SK-N-SH (cell line): ENCODE measurements at regions of chr19 and their contacts with region 1.

Region 1: GRCh38 chr19:30682999-30683536 is 310.9 kb downstream of the ZNF536 start:
- DNase-seq: peak; percentile 88
- H3K4me3 ChIP-seq: peak overlapping the region in 1 of 2 experiments; percentile 7; a peak in 1 of 4 replicates
- H3K27ac ChIP-seq: peak overlapping the region in 1 of 2 experiments; percentile 65; a peak in 2 of 4 replicates
- H3K4me1 ChIP-seq: peaks cover 0 to 48% of the 10 kb centered on the region in 2 experiments; a peak in 2 of 4 replicates
- H3K27me3 ChIP-seq: no peaks in the 10 kb centered on the region
- CTCF ChIP-seq: peak; percentile 97
- EP300 ChIP-seq: peak in 1 of 2 experiments; percentile 71; a peak in 1 of 4 replicates
- RAD21 ChIP-seq: peak; percentile 99

Region 2: GRCh38 chr19:30556230-30556711 is 126.8 kb before region 1 on chr19:
- CTCF ChIA-PET with region 1: no interaction called
- POLR2A ChIA-PET with region 1: no interaction called
- DNase-seq: no peak
- H3K4me3 ChIP-seq: no peak overlapping the region
- H3K27ac ChIP-seq: no peak overlapping the region; a peak in 1 of 4 replicates
- H3K4me1 ChIP-seq: peaks cover 0 to 23% of the 10 kb centered on the region in 2 experiments; a peak in 1 of 4 replicates
- H3K27me3 ChIP-seq: no peaks in the 10 kb centered on the region
- CTCF ChIP-seq: no peak
- EP300 ChIP-seq: no peak
- RAD21 ChIP-seq: no peak

Region 3: GRCh38 chr19:30590596-30591229 is 92.4 kb before region 1 on chr19:
- CTCF ChIA-PET with region 1: no interaction called
- POLR2A ChIA-PET with region 1: no interaction called
- DNase-seq: no peak
- H3K4me3 ChIP-seq: no peak overlapping the region
- H3K27ac ChIP-seq: no peak overlapping the region
- H3K4me1 ChIP-seq: peaks cover 0 to 2% of the 10 kb centered on the region in 2 experiments; a peak in 1 of 4 replicates
- H3K27me3 ChIP-seq: no peaks in the 10 kb centered on the region
- CTCF ChIP-seq: no peak
- EP300 ChIP-seq: no peak
- RAD21 ChIP-seq: no peak

Region 4: DNA sequence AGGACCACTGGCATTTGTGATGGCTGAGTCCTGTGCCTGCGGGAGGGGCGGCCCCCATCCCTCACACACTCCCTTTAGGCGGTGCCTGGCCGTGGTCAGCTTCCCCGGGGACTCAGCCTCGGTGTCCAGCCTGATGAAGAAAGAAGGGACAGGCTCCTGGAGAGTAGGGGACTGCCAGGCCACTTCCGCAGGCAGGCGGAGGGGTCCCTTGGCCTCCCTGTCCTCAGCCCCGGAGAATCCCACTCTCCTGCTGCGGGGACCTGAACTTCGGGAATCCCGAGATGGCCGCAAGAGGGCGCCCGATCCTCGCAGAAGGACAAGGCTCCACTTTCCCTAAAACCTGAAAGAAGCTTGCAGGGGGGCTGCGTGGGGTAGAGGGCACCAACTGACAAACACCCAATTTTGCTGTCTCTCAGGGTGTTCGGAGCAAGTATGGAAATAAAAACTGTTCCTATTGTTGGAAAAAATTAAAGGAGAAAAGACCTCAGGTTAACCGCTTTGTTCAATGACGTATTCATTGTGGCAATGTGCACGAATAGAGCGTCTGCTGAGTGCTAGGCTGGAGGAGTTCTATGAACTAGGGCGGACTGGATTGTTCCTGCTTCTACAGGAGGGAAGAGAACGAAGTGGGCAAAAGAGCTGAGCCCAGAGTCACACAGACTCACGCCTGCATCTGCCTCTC is 13.6 kb before region 1 on chr19:
- CTCF ChIA-PET with region 1: interaction called, 182 read pairs
- POLR2A ChIA-PET with region 1: no interaction called
- DNase-seq: peak; percentile 83
- H3K4me3 ChIP-seq: no peak overlapping the region; a peak in 2 of 4 replicates
- H3K27ac ChIP-seq: no peak overlapping the region
- H3K4me1 ChIP-seq: peaks cover 0 to 5% of the 10 kb centered on the region in 2 experiments; a peak in 1 of 4 replicates
- H3K27me3 ChIP-seq: no peaks in the 10 kb centered on the region
- CTCF ChIP-seq: peak; percentile 84
- EP300 ChIP-seq: no peak
- RAD21 ChIP-seq: peak; percentile 83

Region 5: GRCh38 chr19:30719189-30719998 is 36.3 kb after region 1 on chr19:
- CTCF ChIA-PET with region 1: interaction called, 32 read pairs
- POLR2A ChIA-PET with region 1: interaction called, 4 read pairs
- DNase-seq: peak; percentile 90
- H3K4me3 ChIP-seq: peak overlapping the region; percentile 38 to 60
- H3K27ac ChIP-seq: peak overlapping the region in 1 of 2 experiments; percentile 93; a peak in 2 of 4 replicates
- H3K4me1 ChIP-seq: peaks cover 0 to 20% of the 10 kb centered on the region in 2 experiments; a peak in 2 of 4 replicates
- H3K27me3 ChIP-seq: no peaks in the 10 kb centered on the region
- CTCF ChIP-seq: no peak
- EP300 ChIP-seq: 0 out of 4 replicates have a peak, but pooled peaks of 1 of the 2 experiments have one; percentile 3
- RAD21 ChIP-seq: peak; percentile 60

Region 6: DNA sequence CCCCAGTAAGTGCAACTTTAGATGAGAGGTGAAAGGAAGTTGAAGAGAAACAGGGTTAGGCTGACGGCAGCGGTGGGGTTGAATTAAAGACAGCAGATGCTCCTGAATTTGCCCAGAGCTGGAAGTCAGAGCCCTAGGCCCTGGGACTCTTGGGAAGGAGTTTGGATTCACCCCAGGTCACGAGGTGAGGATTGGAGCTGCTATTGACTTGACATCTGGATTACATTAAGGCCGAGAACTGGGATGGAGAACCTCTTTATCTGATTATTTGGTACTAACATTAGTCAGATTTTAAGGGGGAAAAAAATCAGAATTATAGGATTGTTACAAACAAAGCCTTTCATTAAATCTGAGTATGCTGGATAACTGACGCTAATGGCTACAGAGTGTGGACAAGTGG is 56.3 kb after region 1 on chr19:
- CTCF ChIA-PET with region 1: interaction called, 38 read pairs
- POLR2A ChIA-PET with region 1: no interaction called
- DNase-seq: peak; percentile 62
- H3K4me3 ChIP-seq: no peak overlapping the region
- H3K27ac ChIP-seq: peak overlapping the region in 1 of 2 experiments; percentile 99; a peak in 2 of 4 replicates
- H3K4me1 ChIP-seq: peaks cover 0 to 68% of the 10 kb centered on the region in 2 experiments; a peak in 2 of 4 replicates
- H3K27me3 ChIP-seq: no peaks in the 10 kb centered on the region
- CTCF ChIP-seq: no peak
- EP300 ChIP-seq: peak in 1 of 2 experiments; percentile 85; a peak in 2 of 4 replicates
- RAD21 ChIP-seq: peak; percentile 18; the same call in 1 of the 2 replicates

Region 7: GRCh38 chr19:30984847-30985246 is 301.8 kb after region 1 on chr19:
- CTCF ChIA-PET with region 1: no interaction called
- POLR2A ChIA-PET with region 1: no interaction called
- DNase-seq: no peak
- H3K4me3 ChIP-seq: no peak overlapping the region
- H3K27ac ChIP-seq: no peak overlapping the region
- H3K4me1 ChIP-seq: no peaks in the 10 kb centered on the region
- H3K27me3 ChIP-seq: no peaks in the 10 kb centered on the region
- CTCF ChIP-seq: no peak
- EP300 ChIP-seq: no peak
- RAD21 ChIP-seq: no peak

Region 8: GRCh38 chr19:31316201-31316951 is 633.3 kb after region 1 on chr19:
- CTCF ChIA-PET with region 1: interaction called, 11 read pairs
- POLR2A ChIA-PET with region 1: no interaction called
- DNase-seq: no peak
- H3K4me3 ChIP-seq: no peak overlapping the region
- H3K27ac ChIP-seq: peak overlapping the region in 1 of 2 experiments; percentile 88; a peak in 2 of 4 replicates
- H3K4me1 ChIP-seq: peaks cover 27 to 58% of the 10 kb centered on the region in 2 experiments; a peak in 3 of 4 replicates
- H3K27me3 ChIP-seq: no peaks in the 10 kb centered on the region
- CTCF ChIP-seq: no peak
- EP300 ChIP-seq: no peak
- RAD21 ChIP-seq: no peak

Region 9: GRCh38 chr19:32041681-32042292 is 1358.7 kb after region 1 on chr19:
- CTCF ChIA-PET with region 1: interaction called, 16 read pairs
- POLR2A ChIA-PET with region 1: no interaction called
- DNase-seq: peak; percentile 72
- H3K4me3 ChIP-seq: peak overlapping the region in 1 of 2 experiments; percentile 52; a peak in 1 of 4 replicates
- H3K27ac ChIP-seq: no peak overlapping the region
- H3K4me1 ChIP-seq: peaks cover 0 to 2% of the 10 kb centered on the region in 2 experiments; a peak in 1 of 4 replicates
- H3K27me3 ChIP-seq: no peaks in the 10 kb centered on the region
- CTCF ChIP-seq: peak; percentile 21; the same call in 1 of the 2 replicates
- EP300 ChIP-seq: no peak
- RAD21 ChIP-seq: peak; percentile 85

Region 10: GRCh38 chr19:32339988-32340874 is 1657.2 kb after region 1 on chr19:
- CTCF ChIA-PET with region 1: interaction called, 10 read pairs
- POLR2A ChIA-PET with region 1: no interaction called
- DNase-seq: peak; percentile 74
- H3K4me3 ChIP-seq: no peak overlapping the region
- H3K27ac ChIP-seq: no peak overlapping the region
- H3K4me1 ChIP-seq: no peaks in the 10 kb centered on the region
- H3K27me3 ChIP-seq: no peaks in the 10 kb centered on the region
- CTCF ChIP-seq: peak; percentile 72
- EP300 ChIP-seq: no peak
- RAD21 ChIP-seq: peak; percentile 60